Activated CD8-positive, alpha-beta memory T cell treated with anti-CD3 and anti-CD28 coated beads, Interleukin-2, amount 10 ng/mL, durations not matched to agents 7 days and 5 days (primary cell): ENCODE measurements at regions of chr18 and their contacts with region 1.

Region 1: GRCh38 chr18:58761970-58762780 is 90.9 kb downstream of the MALT1 start:
- DNase-seq: peak; percentile 22
- ATAC-seq: no peak
- H3K4me3 Mint-ChIP-seq: no peak overlapping the region
- H3K27ac Mint-ChIP-seq: no peak overlapping the region
- H3K4me1 Mint-ChIP-seq: peaks cover 15% of the 10 kb centered on the region
- H3K27me3 Mint-ChIP-seq: peaks cover 37% of the 10 kb centered on the region

Region 2: DNA sequence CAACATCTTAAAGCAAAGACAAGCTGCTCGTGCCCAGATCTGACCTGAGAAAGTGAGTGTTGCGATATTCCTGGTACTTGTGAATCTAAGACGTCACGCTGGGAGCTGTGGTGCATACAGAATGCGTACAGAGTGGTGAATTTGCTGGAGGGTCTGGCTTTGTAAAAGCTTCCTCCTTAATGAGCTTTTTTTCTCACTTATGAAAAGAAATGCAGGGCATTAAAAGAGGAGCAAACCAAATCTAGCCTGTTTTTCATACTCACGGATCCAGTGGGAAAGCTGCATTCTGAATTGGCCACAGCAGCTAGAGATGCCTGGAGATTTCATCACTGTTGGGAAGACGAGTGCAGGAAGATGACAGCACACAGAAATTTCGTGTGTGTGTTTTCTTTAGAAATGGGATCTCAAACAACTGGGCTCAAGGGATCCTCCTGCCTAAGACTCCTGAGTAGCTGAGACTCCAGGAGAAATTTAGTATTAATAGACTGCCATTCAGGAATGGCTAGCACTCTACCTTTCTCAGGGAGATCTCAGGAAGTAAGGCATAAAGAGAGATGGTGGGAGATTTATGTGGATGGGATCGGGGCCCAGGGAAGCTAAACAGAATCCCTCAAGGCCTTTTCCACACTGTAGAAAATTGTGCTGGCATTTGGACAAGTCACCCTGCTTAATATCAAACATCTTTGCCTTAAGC is 314.6 kb before region 1 on chr18:
- CTCF ChIA-PET with region 1: no interaction called
- DNase-seq: no peak
- ATAC-seq: no peak
- H3K4me3 Mint-ChIP-seq: no peak overlapping the region
- H3K27ac Mint-ChIP-seq: no peak overlapping the region
- H3K4me1 Mint-ChIP-seq: no peaks in the 10 kb centered on the region
- H3K27me3 Mint-ChIP-seq: peaks cover 16% of the 10 kb centered on the region

Region 3: DNA sequence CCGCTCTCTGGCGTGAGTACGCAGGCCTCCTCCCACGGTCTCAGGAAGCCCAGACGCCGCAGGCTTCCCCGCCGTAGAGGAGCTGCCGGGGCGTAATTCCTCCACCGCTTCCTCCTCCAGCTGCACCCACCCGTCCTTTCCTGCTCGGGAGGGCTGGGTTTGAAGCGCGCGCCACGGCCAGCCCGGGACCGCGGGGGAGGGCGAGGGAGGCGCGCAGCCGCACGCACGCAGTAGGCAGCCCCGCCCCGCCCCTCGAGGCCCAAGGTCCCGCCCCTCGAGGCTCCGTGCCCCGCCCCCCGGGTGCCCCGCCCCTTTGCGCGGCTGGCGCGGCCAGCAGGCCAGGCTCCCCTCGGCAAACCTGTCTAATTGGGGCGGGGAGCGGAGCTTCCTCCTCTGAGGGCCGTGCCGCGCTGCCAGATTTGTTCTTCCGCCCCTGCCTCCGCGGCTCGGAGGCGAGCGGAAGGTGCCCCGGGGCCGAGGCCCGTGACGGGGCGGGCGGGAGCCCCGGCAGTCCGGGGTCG is 91.0 kb before region 1 on chr18 and contains the start of gene MALT1:
- CTCF ChIA-PET with region 1: interaction called, 28 read pairs
- DNase-seq: peak; percentile 95
- ATAC-seq: peak; percentile 93
- H3K4me3 Mint-ChIP-seq: peak within 1 kb of the TSS; percentile 95
- H3K27ac Mint-ChIP-seq: peak within 1 kb of the TSS; percentile 96
- H3K4me1 Mint-ChIP-seq: peaks cover 42% of the 10 kb centered on the region
- H3K27me3 Mint-ChIP-seq: peaks cover 8% of the 10 kb centered on the region
- total RNA-seq, gene MALT1: 30.3 to 31.6 TPM

Region 4: DNA sequence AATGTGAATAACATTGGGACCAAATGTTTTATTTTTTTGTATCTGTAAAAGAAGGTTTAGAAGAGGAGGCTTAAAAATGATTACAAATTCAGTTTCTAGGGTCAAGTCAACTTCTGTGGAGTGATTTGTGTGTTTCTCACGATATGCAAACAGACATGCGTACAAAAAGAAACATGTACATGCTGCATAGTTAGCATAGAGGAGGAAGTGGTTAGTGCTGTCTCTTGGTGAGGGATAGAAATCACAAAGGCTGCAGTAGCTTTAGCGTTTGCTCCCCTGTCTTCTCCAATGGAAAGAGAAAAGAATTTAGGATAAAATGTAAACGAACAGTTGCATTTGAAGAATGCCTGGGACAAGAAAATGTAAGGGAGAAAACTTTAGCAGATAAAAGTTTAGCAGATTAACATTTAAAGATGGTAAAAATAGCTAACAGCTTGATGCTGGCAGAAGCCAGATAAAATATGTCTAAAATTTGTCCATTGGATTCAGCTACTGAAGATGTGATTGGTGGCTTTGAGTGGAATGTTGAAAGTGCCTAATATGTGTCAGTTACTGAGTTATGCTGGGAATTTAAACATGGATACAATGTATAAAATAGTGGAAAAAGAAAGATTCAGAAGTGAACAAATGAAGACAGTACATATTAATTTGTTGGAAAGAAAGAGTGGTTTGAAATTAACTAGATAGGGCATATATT is 46.0 kb before region 1 on chr18:
- CTCF ChIA-PET with region 1: interaction called, 11 read pairs
- DNase-seq: no peak
- ATAC-seq: peak; percentile 84
- H3K4me3 Mint-ChIP-seq: peak overlapping the region; percentile 1
- H3K27ac Mint-ChIP-seq: peak overlapping the region; percentile 77
- H3K4me1 Mint-ChIP-seq: peaks cover 29% of the 10 kb centered on the region
- H3K27me3 Mint-ChIP-seq: no peaks in the 10 kb centered on the region

Region 5: GRCh38 chr18:58748899-58749595 is 13.1 kb before region 1 on chr18:
- CTCF ChIA-PET with region 1: interaction called, 21 read pairs
- DNase-seq: no peak
- ATAC-seq: no peak
- H3K4me3 Mint-ChIP-seq: no peak overlapping the region
- H3K27ac Mint-ChIP-seq: no peak overlapping the region
- H3K4me1 Mint-ChIP-seq: no peaks in the 10 kb centered on the region
- H3K27me3 Mint-ChIP-seq: no peaks in the 10 kb centered on the region